Activated naive CD4-positive, alpha-beta T cell treated with anti-CD3 and anti-CD28 coated beads for 36 hours (primary cell): ENCODE measurements at regions of chr21 and their contacts with region 1.

Region 1: GRCh38 chr21:42117229-42117966 is 46.3 kb downstream of the UMODL1 start:
- DNase-seq: peak; percentile 88
- H3K4me3 Mint-ChIP-seq: no peak overlapping the region
- H3K27ac Mint-ChIP-seq: no peak overlapping the region
- H3K4me1 Mint-ChIP-seq: peaks cover 10% of the 10 kb centered on the region
- H3K27me3 Mint-ChIP-seq: peaks cover 31% of the 10 kb centered on the region

Region 2: DNA sequence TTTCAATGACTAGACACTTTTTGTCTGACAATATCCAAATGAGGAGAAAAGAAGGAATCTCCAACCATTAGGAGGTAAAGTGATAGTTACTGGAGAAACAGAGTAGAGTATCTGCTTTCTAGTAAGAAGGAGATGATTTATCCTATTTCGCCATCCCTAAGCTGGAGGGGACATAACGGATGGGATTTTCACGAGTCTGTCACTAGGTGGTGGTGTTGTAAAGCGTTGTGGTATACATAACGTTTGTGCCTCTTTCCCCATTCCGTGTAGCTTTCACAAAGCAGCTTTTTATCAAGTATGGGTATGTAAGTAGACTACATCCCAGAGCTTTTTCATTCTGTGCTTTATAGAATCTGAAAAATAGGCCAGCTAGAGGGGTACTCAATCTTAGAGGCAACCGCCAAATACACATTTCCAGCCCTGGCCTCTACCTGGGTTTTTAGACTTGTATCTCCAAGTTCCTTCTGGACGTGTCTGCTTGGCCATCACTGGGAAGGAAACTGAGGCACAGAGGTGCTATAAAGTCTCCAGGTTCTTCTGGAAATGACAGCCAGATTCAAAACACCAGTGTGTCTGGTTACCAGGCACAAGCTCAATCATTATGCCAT is 834.1 kb before region 1 on chr21:
- CTCF ChIA-PET with region 1: interaction called, 7 read pairs
- intact Hi-C with region 1: loop called (anchors 2 kb)
- DNase-seq: peak; percentile 67
- H3K4me3 Mint-ChIP-seq: no peak overlapping the region
- H3K27ac Mint-ChIP-seq: no peak overlapping the region
- H3K4me1 Mint-ChIP-seq: no peaks in the 10 kb centered on the region
- H3K27me3 Mint-ChIP-seq: peaks cover 17% of the 10 kb centered on the region

Region 3: GRCh38 chr21:41816220-41817165 is 300.9 kb before region 1 on chr21:
- CTCF ChIA-PET with region 1: interaction called, 34 read pairs
- intact Hi-C with region 1: loop called (anchors 1 kb)
- DNase-seq: peak; percentile 68
- H3K4me3 Mint-ChIP-seq: no peak overlapping the region
- H3K27ac Mint-ChIP-seq: no peak overlapping the region
- H3K4me1 Mint-ChIP-seq: peaks cover 10% of the 10 kb centered on the region
- H3K27me3 Mint-ChIP-seq: no peaks in the 10 kb centered on the region

Region 4: DNA sequence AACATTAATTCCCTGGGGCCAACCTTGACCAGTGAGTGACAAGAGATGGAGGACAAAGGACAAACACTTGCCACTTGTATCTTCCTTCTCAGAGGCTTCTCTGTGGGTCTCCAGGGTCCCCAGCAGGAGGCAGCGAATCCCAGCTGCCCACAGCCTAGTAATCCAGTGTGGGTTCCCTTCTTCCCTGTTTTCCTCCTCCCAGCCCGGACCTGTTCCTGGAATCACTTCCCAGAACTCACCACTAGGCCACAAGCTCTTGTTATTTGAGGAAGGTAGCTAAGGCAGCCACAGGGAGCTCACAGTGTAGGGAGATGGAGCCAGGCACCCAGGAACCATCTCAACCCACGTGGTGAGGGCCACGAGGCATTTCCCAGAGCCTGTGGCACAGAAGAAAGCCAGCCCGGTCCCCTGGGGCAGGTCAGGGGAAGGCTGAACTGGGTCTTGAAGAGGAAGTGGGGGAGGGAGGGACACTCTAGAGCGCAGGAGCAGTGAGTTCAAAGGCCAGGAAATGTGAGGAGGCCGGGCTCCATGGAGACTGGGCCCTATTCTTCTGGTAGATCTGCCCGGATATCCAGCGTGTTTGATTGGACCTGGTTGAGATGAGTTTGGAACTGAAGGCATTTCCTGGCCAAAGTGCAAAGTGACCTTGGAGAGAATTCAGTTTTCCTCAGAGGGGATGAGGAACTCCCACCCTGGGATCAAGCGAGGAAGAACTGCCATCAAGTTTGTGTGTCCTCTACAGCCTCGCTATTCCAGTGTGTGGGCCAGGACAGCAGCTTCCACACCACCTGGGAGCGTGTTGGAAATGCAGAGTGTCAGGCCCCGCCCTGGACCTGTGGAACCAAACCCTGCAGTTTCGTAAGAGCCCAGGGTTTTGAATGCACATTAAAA is 143.3 kb before region 1 on chr21:
- CTCF ChIA-PET with region 1: interaction called, 4 read pairs
- intact Hi-C with region 1: loop called (anchors 5 kb)
- DNase-seq: peak; percentile 52
- H3K4me3 Mint-ChIP-seq: no peak overlapping the region
- H3K27ac Mint-ChIP-seq: peak overlapping the region; percentile 50
- H3K4me1 Mint-ChIP-seq: peaks cover 12% of the 10 kb centered on the region
- H3K27me3 Mint-ChIP-seq: no peaks in the 10 kb centered on the region

Region 5: GRCh38 chr21:42071146-42071737 is 46.2 kb before region 1 on chr21 and contains the start of gene UMODL1:
- CTCF ChIA-PET with region 1: interaction called, 13 read pairs
- intact Hi-C with region 1: no loop called
- DNase-seq: no peak
- H3K4me3 Mint-ChIP-seq: no peak within 1 kb of the TSS
- H3K27ac Mint-ChIP-seq: no peak within 1 kb of the TSS
- H3K4me1 Mint-ChIP-seq: peaks cover 1% of the 10 kb centered on the region
- H3K27me3 Mint-ChIP-seq: no peaks in the 10 kb centered on the region
- total RNA-seq, gene UMODL1: not detected